ENCODE measurements at regions of chr9 and their contacts with region 1.

Region 1: DNA sequence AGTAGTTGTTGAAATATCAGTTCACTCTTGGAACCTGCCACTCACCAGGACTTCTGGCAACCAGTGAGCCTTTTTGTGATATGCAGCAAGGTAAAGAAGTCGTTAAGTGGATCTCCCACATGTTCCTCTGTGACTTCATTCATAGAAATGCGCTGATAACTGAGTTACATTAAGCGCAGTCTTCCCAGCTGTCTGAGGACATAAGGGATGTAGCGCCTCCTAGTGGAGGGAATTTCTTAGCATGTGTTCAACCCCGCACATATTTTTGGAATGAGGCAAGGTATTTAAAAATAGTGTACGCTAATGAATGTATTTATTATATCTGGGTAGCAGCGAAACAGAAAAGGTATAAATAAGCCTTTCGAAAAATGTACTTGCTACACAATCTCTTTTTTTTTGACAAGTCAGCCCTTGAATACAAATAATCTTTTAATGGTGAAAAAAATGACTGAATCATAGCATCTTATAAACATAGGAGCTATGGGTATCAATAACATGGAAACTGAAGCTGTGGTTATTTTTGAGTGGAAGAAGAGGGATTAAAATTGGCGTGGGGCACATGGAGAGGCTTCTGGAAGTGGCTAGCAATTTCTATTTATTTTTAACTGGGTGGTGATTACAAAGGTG is 38.0 kb downstream of the PALM2AKAP2 start:
- DNase-seq: peak; percentile 20
- ATAC-seq: peak; percentile 86
- H3K4me3 ChIP-seq: no peak overlapping the region
- H3K27ac ChIP-seq: no peak overlapping the region
- H3K4me1 ChIP-seq: no peaks in the 10 kb centered on the region
- H3K27me3 ChIP-seq: peaks cover 0 to 8% of the 10 kb centered on the region in 2 experiments; a peak in 1 of 4 replicates
- CTCF ChIP-seq: peak; percentile 75 to 94 (median 77)
- EP300 ChIP-seq: no peak
- POLR2A ChIP-seq: no peak
- RAD21 ChIP-seq: peak; percentile 75

Region 2: GRCh38 chr9:109574068-109574882 is 243.7 kb before region 1 on chr9:
- CTCF ChIA-PET with region 1: interaction called, 71 read pairs
- POLR2A ChIA-PET with region 1: no interaction called
- RAD21 ChIA-PET with region 1: interaction called, 7 read pairs
- SMC1A ChIA-PET with region 1: interaction called, 19 read pairs
- in situ Hi-C with region 1: loop called (anchors 25 kb)
- intact Hi-C with region 1: loop called (anchors 1 kb)
- DNase-seq: peak; percentile 5
- ATAC-seq: peak; percentile 80
- H3K4me3 ChIP-seq: no peak overlapping the region
- H3K27ac ChIP-seq: no peak overlapping the region
- H3K4me1 ChIP-seq: no peaks in the 10 kb centered on the region
- H3K27me3 ChIP-seq: no peaks in the 10 kb centered on the region
- CTCF ChIP-seq: peak; percentile 58 to 67 (median 58); a peak in 5 of 6 replicates
- EP300 ChIP-seq: no peak
- POLR2A ChIP-seq: no peak
- RAD21 ChIP-seq: peak; percentile 85

Region 3: GRCh38 chr9:109745335-109746283 is 72.3 kb before region 1 on chr9:
- CTCF ChIA-PET with region 1: no interaction called
- POLR2A ChIA-PET with region 1: no interaction called
- RAD21 ChIA-PET with region 1: no interaction called
- SMC1A ChIA-PET with region 1: no interaction called
- in situ Hi-C with region 1: no loop called
- intact Hi-C with region 1: no loop called
- DNase-seq: no peak
- ATAC-seq: no peak
- H3K4me3 ChIP-seq: no peak overlapping the region
- H3K27ac ChIP-seq: no peak overlapping the region
- H3K4me1 ChIP-seq: no peaks in the 10 kb centered on the region
- H3K27me3 ChIP-seq: no peaks in the 10 kb centered on the region; a peak in 1 of 4 replicates
- CTCF ChIP-seq: no peak
- EP300 ChIP-seq: no peak
- POLR2A ChIP-seq: no peak
- RAD21 ChIP-seq: no peak

Region 4: GRCh38 chr9:109805050-109805449 is 12.9 kb before region 1 on chr9:
- CTCF ChIA-PET with region 1: interaction called, 19 read pairs
- POLR2A ChIA-PET with region 1: no interaction called
- RAD21 ChIA-PET with region 1: no interaction called
- SMC1A ChIA-PET with region 1: interaction called, 3 read pairs
- in situ Hi-C with region 1: no loop called
- intact Hi-C with region 1: no loop called
- DNase-seq: no peak
- ATAC-seq: no peak
- H3K4me3 ChIP-seq: no peak overlapping the region
- H3K27ac ChIP-seq: no peak overlapping the region
- H3K4me1 ChIP-seq: no peaks in the 10 kb centered on the region
- H3K27me3 ChIP-seq: peaks cover 0 to 2% of the 10 kb centered on the region in 2 experiments; a peak in 2 of 4 replicates
- CTCF ChIP-seq: no peak
- EP300 ChIP-seq: no peak
- POLR2A ChIP-seq: no peak
- RAD21 ChIP-seq: no peak

Region 5: GRCh38 chr9:109843641-109844040 is 25.7 kb after region 1 on chr9:
- CTCF ChIA-PET with region 1: no interaction called
- POLR2A ChIA-PET with region 1: no interaction called
- RAD21 ChIA-PET with region 1: no interaction called
- SMC1A ChIA-PET with region 1: no interaction called
- in situ Hi-C with region 1: no loop called
- intact Hi-C with region 1: no loop called
- DNase-seq: no peak
- ATAC-seq: no peak
- H3K4me3 ChIP-seq: no peak overlapping the region
- H3K27ac ChIP-seq: no peak overlapping the region
- H3K4me1 ChIP-seq: no peaks in the 10 kb centered on the region
- H3K27me3 ChIP-seq: no peaks in the 10 kb centered on the region
- CTCF ChIP-seq: no peak
- EP300 ChIP-seq: no peak
- POLR2A ChIP-seq: no peak
- RAD21 ChIP-seq: no peak

Region 6: GRCh38 chr9:109859433-109859832 is 41.5 kb after region 1 on chr9:
- CTCF ChIA-PET with region 1: interaction called, 13 read pairs
- POLR2A ChIA-PET with region 1: no interaction called
- RAD21 ChIA-PET with region 1: no interaction called
- SMC1A ChIA-PET with region 1: interaction called, 3 read pairs
- in situ Hi-C with region 1: no loop called
- intact Hi-C with region 1: no loop called
- DNase-seq: no peak
- ATAC-seq: no peak
- H3K4me3 ChIP-seq: no peak overlapping the region
- H3K27ac ChIP-seq: no peak overlapping the region
- H3K4me1 ChIP-seq: no peaks in the 10 kb centered on the region
- H3K27me3 ChIP-seq: peaks cover 3% of the 10 kb centered on the region in 2 experiments
- CTCF ChIP-seq: peak in 1 of 3 experiments; percentile 34; a peak in 3 of 6 replicates
- EP300 ChIP-seq: no peak
- POLR2A ChIP-seq: no peak
- RAD21 ChIP-seq: no peak

Region 7: GRCh38 chr9:110058304-110058953 is 240.5 kb after region 1 on chr9:
- CTCF ChIA-PET with region 1: interaction called, 3 read pairs
- POLR2A ChIA-PET with region 1: no interaction called
- RAD21 ChIA-PET with region 1: no interaction called
- SMC1A ChIA-PET with region 1: interaction called, 3 read pairs
- in situ Hi-C with region 1: no loop called
- intact Hi-C with region 1: loop called (anchors 5 kb)
- DNase-seq: no peak
- ATAC-seq: peak; percentile 83
- H3K4me3 ChIP-seq: peak overlapping the region; percentile 30; the same call in 1 of the 2 replicates
- H3K27ac ChIP-seq: no peak overlapping the region; the same call in 1 of the 2 replicates
- H3K4me1 ChIP-seq: peaks cover 19% of the 10 kb centered on the region
- H3K27me3 ChIP-seq: no peaks in the 10 kb centered on the region
- CTCF ChIP-seq: peak; percentile 63 to 74 (median 72)
- EP300 ChIP-seq: no peak
- POLR2A ChIP-seq: no peak
- RAD21 ChIP-seq: peak; percentile 98